Tibial artery (tissue), 4 donors: ENCODE measurements at regions of chr3 and their contacts with region 1.

Region 1: GRCh38 chr3:113051302-113051711 is 60.5 kb downstream of the GTPBP8 start:
- DNase-seq: peak; percentile 88 to 91
- H3K4me3 ChIP-seq: no peak overlapping the region
- H3K27ac ChIP-seq: peak overlapping the region in 1 of 2 donors; percentile 34
- H3K4me1 ChIP-seq: peaks cover 0 to 7% (median 5%) of the 10 kb centered on the region in 4 donors
- H3K27me3 ChIP-seq: no peaks in the 10 kb centered on the region
- CTCF ChIP-seq: peak; percentile 92 to 97

Region 2: DNA sequence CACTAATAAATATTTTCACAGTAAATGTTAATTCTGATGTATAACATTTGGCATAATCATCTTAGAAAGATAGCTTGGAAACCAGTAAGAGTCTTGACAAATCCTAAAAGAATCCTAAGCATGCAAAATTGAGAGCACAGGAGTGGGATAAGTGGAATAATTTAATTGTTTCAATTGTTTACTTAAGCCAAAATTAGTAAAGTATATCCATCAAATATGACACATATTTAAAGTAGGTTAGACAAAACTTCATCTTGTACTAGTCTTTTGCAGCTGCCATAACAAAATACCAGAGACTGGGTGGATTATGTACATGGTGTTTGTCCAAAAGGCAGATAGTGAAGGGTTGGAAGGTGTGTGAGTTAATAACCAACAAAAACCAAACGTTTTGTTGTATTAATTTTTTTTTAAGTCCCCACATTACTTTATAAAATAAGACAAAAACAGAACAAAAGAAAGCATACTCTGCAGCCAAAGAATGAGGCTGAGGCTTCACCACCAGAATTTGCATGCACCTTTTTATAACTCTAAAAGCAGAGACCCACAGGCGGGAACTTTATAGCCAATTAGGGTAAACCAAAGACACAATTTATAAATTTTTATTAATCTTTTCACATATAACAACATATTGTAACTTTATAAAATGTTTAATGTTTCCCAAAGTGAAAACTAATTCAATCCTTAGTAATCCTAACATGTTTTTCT is 162.8 kb before region 1 on chr3:
- intact Hi-C with region 1: no loop called
- DNase-seq: no peak
- H3K4me3 ChIP-seq: no peak overlapping the region
- H3K27ac ChIP-seq: no peak overlapping the region
- H3K4me1 ChIP-seq: no peaks in the 10 kb centered on the region
- H3K27me3 ChIP-seq: no peaks in the 10 kb centered on the region
- CTCF ChIP-seq: no peak

Region 3: GRCh38 chr3:113279686-113280085 is 228.4 kb after region 1 on chr3:
- intact Hi-C with region 1: loop called (anchors 5 kb)
- DNase-seq: no peak
- H3K4me3 ChIP-seq: no peak overlapping the region
- H3K27ac ChIP-seq: no peak overlapping the region
- H3K4me1 ChIP-seq: peaks cover 0 to 24% (median 11%) of the 10 kb centered on the region in 4 donors
- H3K27me3 ChIP-seq: no peaks in the 10 kb centered on the region
- CTCF ChIP-seq: no peak